ENCODE measurements at regions of chr11 and their contacts with region 1.

Region 1: GRCh38 chr11:14537134-14537599 is 17.0 kb upstream of the PSMA1 start:
- DNase-seq: peak; percentile 49 to 69 (median 65)
- H3K4me3 ChIP-seq: peak overlapping the region in 1 of 2 donors; percentile 23
- H3K4me3 Mint-ChIP-seq: peak overlapping the region; percentile 69 to 90 (median 82)
- H3K27ac ChIP-seq: peak overlapping the region; percentile 48
- H3K27ac Mint-ChIP-seq: peak overlapping the region; percentile 77 to 97 (median 92)
- H3K4me1 ChIP-seq: peaks cover 5% of the 10 kb centered on the region
- H3K4me1 Mint-ChIP-seq: peaks cover 3 to 14% (median 4%) of the 10 kb centered on the region in 4 donors
- H3K27me3 ChIP-seq: no peaks in the 10 kb centered on the region
- H3K27me3 Mint-ChIP-seq: no peaks in the 10 kb centered on the region

Region 2: DNA sequence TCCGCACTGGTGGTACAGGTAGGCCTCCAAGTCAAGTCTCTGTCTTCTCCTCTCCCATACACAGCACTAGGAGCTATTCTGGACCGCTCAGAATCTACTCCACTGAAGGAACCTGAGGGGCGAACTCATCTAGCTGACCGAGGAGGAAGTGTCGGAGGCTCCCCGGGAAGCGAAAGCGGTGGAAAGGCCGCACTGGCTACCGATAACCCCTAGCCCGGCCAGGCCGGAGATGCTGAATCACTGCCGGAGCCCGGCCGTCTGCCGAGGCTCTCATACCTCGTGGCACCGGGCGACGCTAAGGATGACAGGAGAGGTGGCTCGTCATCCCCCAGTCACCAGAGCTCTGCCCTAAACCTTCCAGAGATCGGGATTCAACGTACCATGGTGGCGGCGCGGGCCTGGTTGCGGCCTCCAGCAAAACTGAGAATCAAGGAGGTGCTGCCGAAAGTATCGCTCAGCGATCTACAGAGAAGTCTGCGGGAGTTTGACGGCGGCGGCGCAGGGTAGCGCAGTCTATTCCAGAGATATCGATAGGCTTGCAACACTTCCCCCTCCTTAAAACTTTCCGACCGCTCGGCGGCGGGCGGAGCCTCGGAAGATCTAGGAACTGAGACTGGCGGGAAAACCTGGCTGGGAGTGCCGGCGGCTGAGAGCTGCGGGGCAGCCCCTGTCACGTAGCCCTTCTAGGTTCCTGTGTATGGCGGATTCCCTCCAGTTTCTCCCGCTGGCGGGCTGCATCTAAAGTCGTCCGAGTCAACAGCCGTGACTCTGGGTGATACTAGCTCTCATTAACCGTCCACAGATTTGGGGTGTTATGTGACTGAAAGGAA is 17.0 kb before region 1 on chr11 and contains the start of gene PSMA1:
- CTCF ChIA-PET with region 1: interaction called, 3 read pairs
- POLR2A ChIA-PET with region 1: interaction called, 10 read pairs
- intact Hi-C with region 1: no loop called
- DNase-seq: peak; percentile 88 to 96 (median 91)
- H3K4me3 ChIP-seq: peak within 1 kb of the TSS; percentile 63 to 95
- H3K4me3 Mint-ChIP-seq: peak within 1 kb of the TSS; percentile 93 to 99 (median 98)
- H3K27ac ChIP-seq: peak within 1 kb of the TSS; percentile 99
- H3K27ac Mint-ChIP-seq: peak within 1 kb of the TSS; percentile 95 to 98 (median 98)
- H3K4me1 ChIP-seq: peaks cover 27% of the 10 kb centered on the region
- H3K4me1 Mint-ChIP-seq: peaks cover 17 to 41% (median 29%) of the 10 kb centered on the region in 4 donors
- H3K27me3 ChIP-seq: no peaks in the 10 kb centered on the region
- H3K27me3 Mint-ChIP-seq: no peaks in the 10 kb centered on the region
- total RNA-seq, gene PSMA1: 95.8 to 105 TPM

Region 3: GRCh38 chr11:14554959-14555358 is 17.8 kb after region 1 on chr11:
- CTCF ChIA-PET with region 1: interaction called, 7 read pairs
- POLR2A ChIA-PET with region 1: interaction called, 4 read pairs
- intact Hi-C with region 1: loop called (anchors 2 kb)
- DNase-seq: peak; percentile 66 to 83 (median 78)
- H3K4me3 ChIP-seq: no peak overlapping the region
- H3K4me3 Mint-ChIP-seq: peak overlapping the region in 7 of 8 donors; percentile 12 to 84 (median 50)
- H3K27ac ChIP-seq: peak overlapping the region; percentile 37
- H3K27ac Mint-ChIP-seq: peak overlapping the region; percentile 79 to 97 (median 95)
- H3K4me1 ChIP-seq: peaks cover 27% of the 10 kb centered on the region
- H3K4me1 Mint-ChIP-seq: peaks cover 21 to 44% (median 27%) of the 10 kb centered on the region in 4 donors
- H3K27me3 ChIP-seq: no peaks in the 10 kb centered on the region
- H3K27me3 Mint-ChIP-seq: peaks cover 0 to 2% of the 10 kb centered on the region in 2 donors

Region 4: GRCh38 chr11:15006139-15006759 is 469.1 kb after region 1 on chr11:
- CTCF ChIA-PET with region 1: no interaction called
- POLR2A ChIA-PET with region 1: no interaction called
- intact Hi-C with region 1: loop called (anchors 2 kb)
- DNase-seq: peak in 4 of 5 donors; percentile 30 to 48 (median 39)
- H3K4me3 ChIP-seq: no peak overlapping the region
- H3K4me3 Mint-ChIP-seq: no peak overlapping the region
- H3K27ac ChIP-seq: no peak overlapping the region
- H3K27ac Mint-ChIP-seq: no peak overlapping the region
- H3K4me1 ChIP-seq: no peaks in the 10 kb centered on the region
- H3K4me1 Mint-ChIP-seq: no peaks in the 10 kb centered on the region
- H3K27me3 ChIP-seq: no peaks in the 10 kb centered on the region
- H3K27me3 Mint-ChIP-seq: peaks cover 14 to 26% of the 10 kb centered on the region in 2 donors

Measured in CD4-positive, alpha-beta memory T cell (primary cell).